B cell (primary cell): ENCODE measurements at regions of chr3 and their contacts with region 1.

Region 1: GRCh38 chr3:128969993-128970739 is 23.7 kb downstream of the CFAP92 start:
- DNase-seq: peak; percentile 80
- ATAC-seq: peak; percentile 64
- H3K4me3 ChIP-seq: no peak overlapping the region
- H3K4me3 Mint-ChIP-seq: no peak overlapping the region
- H3K27ac ChIP-seq: no peak overlapping the region
- H3K27ac Mint-ChIP-seq: no peak overlapping the region
- H3K4me1 ChIP-seq: peaks cover 14 to 15% of the 10 kb centered on the region in 2 donors
- H3K4me1 Mint-ChIP-seq: peaks cover 11% of the 10 kb centered on the region
- H3K27me3 ChIP-seq: no peaks in the 10 kb centered on the region
- H3K27me3 Mint-ChIP-seq: peaks cover 4% of the 10 kb centered on the region
- CTCF ChIP-seq: peak; percentile 97

Region 2: DNA sequence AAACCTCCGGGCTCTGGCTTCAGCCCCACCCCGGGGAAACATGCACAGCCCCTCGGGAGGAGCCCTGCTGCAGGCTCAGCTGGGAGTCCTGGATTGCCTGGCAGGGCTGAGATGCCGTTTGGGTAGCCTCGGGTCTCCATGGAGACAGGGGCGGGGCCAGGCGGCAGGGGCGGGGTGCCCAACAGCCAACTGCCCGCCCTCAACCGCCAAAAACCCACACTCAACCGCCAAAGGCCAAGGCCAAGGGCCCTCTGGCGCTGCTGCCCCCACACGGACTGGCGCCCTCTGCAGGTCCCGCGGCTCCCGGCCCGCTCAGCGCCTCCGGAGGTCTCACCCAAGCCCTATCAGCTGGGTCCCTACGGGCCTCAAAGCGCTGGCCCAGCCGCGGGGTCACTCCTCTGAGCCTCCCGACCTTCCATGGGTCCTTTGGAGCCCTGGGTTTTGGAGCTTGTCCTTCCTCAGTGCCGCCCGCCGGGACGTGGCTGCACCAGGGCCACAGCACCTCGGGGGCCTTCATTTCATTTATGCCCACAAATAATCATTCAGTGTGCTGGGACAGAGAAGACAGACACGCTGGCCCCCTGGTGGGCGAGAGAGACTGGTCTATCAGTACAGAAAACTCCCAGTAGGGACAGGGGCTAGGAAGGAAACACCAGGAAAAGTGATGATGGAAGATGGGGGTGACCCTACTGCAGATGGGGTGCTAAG is 124.2 kb before region 1 on chr3:
- CTCF ChIA-PET with region 1: no interaction called
- POLR2A ChIA-PET with region 1: no interaction called
- intact Hi-C with region 1: no loop called
- DNase-seq: peak; percentile 82
- ATAC-seq: peak; percentile 86
- H3K4me3 ChIP-seq: peak overlapping the region in 4 of 5 experiments; percentile 45 to 70 (median 58)
- H3K4me3 Mint-ChIP-seq: peak overlapping the region; percentile 85
- H3K27ac ChIP-seq: peak overlapping the region in 1 of 2 donors; percentile 52
- H3K27ac Mint-ChIP-seq: peak overlapping the region; percentile 56
- H3K4me1 ChIP-seq: peaks cover 11 to 17% of the 10 kb centered on the region in 2 donors
- H3K4me1 Mint-ChIP-seq: peaks cover 11% of the 10 kb centered on the region
- H3K27me3 ChIP-seq: no peaks in the 10 kb centered on the region
- H3K27me3 Mint-ChIP-seq: no peaks in the 10 kb centered on the region
- CTCF ChIP-seq: peak; percentile 85

Region 3: GRCh38 chr3:128879125-128879969 is 90.8 kb before region 1 on chr3 and contains the start of gene ACAD9:
- CTCF ChIA-PET with region 1: no interaction called
- POLR2A ChIA-PET with region 1: no interaction called
- intact Hi-C with region 1: no loop called
- DNase-seq: peak; percentile 97
- ATAC-seq: peak; percentile 96
- H3K4me3 ChIP-seq: peak within 1 kb of the TSS; percentile 86 to 97 (median 88)
- H3K4me3 Mint-ChIP-seq: peak within 1 kb of the TSS; percentile 95
- H3K27ac ChIP-seq: peak within 1 kb of the TSS; percentile 93 to 98
- H3K27ac Mint-ChIP-seq: peak within 1 kb of the TSS; percentile 95
- H3K4me1 ChIP-seq: peaks cover 24 to 31% of the 10 kb centered on the region in 2 donors
- H3K4me1 Mint-ChIP-seq: peaks cover 55% of the 10 kb centered on the region
- H3K27me3 ChIP-seq: no peaks in the 10 kb centered on the region
- H3K27me3 Mint-ChIP-seq: no peaks in the 10 kb centered on the region
- CTCF ChIP-seq: no peak
- total RNA-seq, gene ACAD9: 57.6 and 71.8 TPM in 2 replicates

Region 4: DNA sequence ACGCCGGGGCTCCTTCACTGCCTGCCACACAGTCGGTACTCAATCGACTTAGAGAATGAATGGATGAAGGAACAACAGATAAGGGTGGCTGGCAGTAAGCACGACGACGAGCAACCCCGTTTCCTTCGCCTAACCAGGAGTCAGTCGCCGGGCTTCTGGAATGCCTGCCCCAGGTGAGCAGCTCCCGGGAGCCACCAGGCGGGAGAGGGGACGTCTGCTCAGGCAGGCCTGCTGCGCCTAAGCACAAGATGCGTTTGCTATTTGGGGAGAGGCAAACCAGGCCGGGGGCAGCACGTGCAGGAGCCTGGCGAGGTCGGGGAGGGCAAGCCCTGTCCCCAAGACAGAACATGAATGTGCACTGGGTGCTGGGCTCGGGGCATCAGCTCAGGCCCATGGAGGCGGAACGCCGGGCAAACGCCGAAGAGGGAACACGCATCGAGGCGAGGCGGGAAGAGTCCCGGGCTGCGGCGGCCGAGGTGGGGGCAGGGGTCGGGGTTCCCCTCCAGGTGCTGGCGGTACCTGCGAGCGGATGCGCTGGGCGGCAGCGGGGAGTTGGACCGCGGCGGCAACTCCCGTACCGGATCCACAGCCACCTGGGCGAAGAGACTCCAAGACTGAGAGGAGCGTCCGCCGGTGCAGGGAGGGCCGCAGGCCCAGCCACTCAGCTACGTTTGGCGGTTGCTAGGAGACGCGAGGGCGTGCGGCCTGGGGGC is 23.5 kb after region 1 on chr3 and contains the start of gene CFAP92:
- CTCF ChIA-PET with region 1: interaction called, 29 read pairs
- POLR2A ChIA-PET with region 1: no interaction called
- intact Hi-C with region 1: loop called (anchors 2 kb)
- DNase-seq: peak; percentile 92
- ATAC-seq: peak; percentile 99
- H3K4me3 ChIP-seq: peak within 1 kb of the TSS; percentile 19 to 55 (median 44)
- H3K4me3 Mint-ChIP-seq: peak within 1 kb of the TSS; percentile 73
- H3K27ac ChIP-seq: peak within 1 kb of the TSS in 1 of 2 donors; percentile 9
- H3K27ac Mint-ChIP-seq: peak within 1 kb of the TSS; percentile 61
- H3K4me1 ChIP-seq: peaks cover 20 to 27% of the 10 kb centered on the region in 2 donors
- H3K4me1 Mint-ChIP-seq: peaks cover 16% of the 10 kb centered on the region
- H3K27me3 ChIP-seq: peaks cover 0 to 30% (median 9%) of the 10 kb centered on the region in 4 experiments
- H3K27me3 Mint-ChIP-seq: peaks cover 14% of the 10 kb centered on the region
- CTCF ChIP-seq: no peak
- total RNA-seq, gene CFAP92: not detected in 2 replicates

Region 5: DNA sequence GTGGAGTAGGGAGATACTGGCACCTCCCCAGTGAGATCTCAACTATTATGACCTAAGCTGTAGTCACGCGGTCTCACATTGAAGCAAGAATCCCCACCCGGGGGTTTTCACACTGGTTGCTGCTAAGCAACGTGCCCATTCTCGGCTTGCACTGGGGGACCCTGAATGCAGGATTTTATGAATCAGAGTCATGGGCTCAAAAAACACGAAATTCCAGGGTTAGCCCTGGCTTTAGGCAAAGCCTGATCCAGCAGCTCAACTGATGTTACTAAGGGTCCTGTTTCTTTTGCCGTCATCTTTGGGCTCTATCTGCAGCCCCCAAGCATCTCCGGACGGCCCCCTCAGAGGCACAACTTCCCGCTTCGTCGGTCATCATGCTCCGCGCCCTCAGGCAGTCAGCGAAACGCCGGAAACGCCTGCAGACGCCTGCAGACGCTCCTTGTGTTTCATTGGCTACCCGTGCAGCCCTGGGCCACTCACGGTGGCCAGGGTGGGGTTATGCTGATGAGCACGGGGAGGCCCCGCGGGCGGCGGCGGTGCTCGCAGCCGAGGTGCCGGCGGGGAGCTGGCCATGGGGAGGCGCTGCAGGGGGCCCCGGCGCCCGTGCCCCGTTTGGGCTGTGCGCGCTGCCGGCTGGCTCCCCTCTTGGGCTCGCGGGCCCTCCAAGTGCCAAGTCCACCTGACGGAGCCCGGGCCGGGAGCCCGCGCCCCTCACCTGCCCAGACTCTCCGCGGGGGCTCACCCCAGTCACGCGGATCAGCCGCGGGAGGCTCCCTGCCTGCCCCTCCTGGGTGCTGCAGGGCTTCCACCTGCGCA is 56.8 kb after region 1 on chr3:
- CTCF ChIA-PET with region 1: interaction called, 134 read pairs
- POLR2A ChIA-PET with region 1: no interaction called
- intact Hi-C with region 1: loop called (anchors 1 kb)
- DNase-seq: peak; percentile 95
- ATAC-seq: peak; percentile 98
- H3K4me3 ChIP-seq: peak overlapping the region; percentile 30 to 71 (median 61)
- H3K4me3 Mint-ChIP-seq: peak overlapping the region; percentile 91
- H3K27ac ChIP-seq: peak overlapping the region; percentile 74 to 83
- H3K27ac Mint-ChIP-seq: peak overlapping the region; percentile 95
- H3K4me1 ChIP-seq: peaks cover 13 to 15% of the 10 kb centered on the region in 2 donors
- H3K4me1 Mint-ChIP-seq: peaks cover 22% of the 10 kb centered on the region
- H3K27me3 ChIP-seq: peaks cover 0 to 6% (median 0%) of the 10 kb centered on the region in 4 experiments
- H3K27me3 Mint-ChIP-seq: peaks cover 3% of the 10 kb centered on the region
- CTCF ChIP-seq: peak; percentile 91

Region 6: GRCh38 chr3:129095285-129095684 is 125.1 kb after region 1 on chr3:
- CTCF ChIA-PET with region 1: interaction called, 11 read pairs
- POLR2A ChIA-PET with region 1: no interaction called
- intact Hi-C with region 1: no loop called
- DNase-seq: no peak
- ATAC-seq: no peak
- H3K4me3 ChIP-seq: no peak overlapping the region
- H3K4me3 Mint-ChIP-seq: no peak overlapping the region
- H3K27ac ChIP-seq: no peak overlapping the region
- H3K27ac Mint-ChIP-seq: no peak overlapping the region
- H3K4me1 ChIP-seq: no peaks in the 10 kb centered on the region
- H3K4me1 Mint-ChIP-seq: no peaks in the 10 kb centered on the region
- H3K27me3 ChIP-seq: no peaks in the 10 kb centered on the region
- H3K27me3 Mint-ChIP-seq: no peaks in the 10 kb centered on the region
- CTCF ChIP-seq: no peak

Region 7: GRCh38 chr3:129139911-129140310 is 169.7 kb after region 1 on chr3:
- CTCF ChIA-PET with region 1: no interaction called
- POLR2A ChIA-PET with region 1: no interaction called
- intact Hi-C with region 1: loop called (anchors 10 kb)
- DNase-seq: no peak
- ATAC-seq: no peak
- H3K4me3 ChIP-seq: no peak overlapping the region
- H3K4me3 Mint-ChIP-seq: no peak overlapping the region
- H3K27ac ChIP-seq: no peak overlapping the region
- H3K27ac Mint-ChIP-seq: no peak overlapping the region
- H3K4me1 ChIP-seq: no peaks in the 10 kb centered on the region
- H3K4me1 Mint-ChIP-seq: no peaks in the 10 kb centered on the region
- H3K27me3 ChIP-seq: no peaks in the 10 kb centered on the region
- H3K27me3 Mint-ChIP-seq: no peaks in the 10 kb centered on the region
- CTCF ChIP-seq: no peak

Region 8: GRCh38 chr3:129316131-129317013 is 346.2 kb after region 1 on chr3:
- CTCF ChIA-PET with region 1: interaction called, 41 read pairs
- POLR2A ChIA-PET with region 1: no interaction called
- intact Hi-C with region 1: no loop called
- DNase-seq: peak; percentile 88
- ATAC-seq: peak; percentile 45
- H3K4me3 ChIP-seq: peak overlapping the region; percentile 30 to 84 (median 82)
- H3K4me3 Mint-ChIP-seq: peak overlapping the region; percentile 82
- H3K27ac ChIP-seq: peak overlapping the region in 1 of 2 donors; percentile 78
- H3K27ac Mint-ChIP-seq: peak overlapping the region; percentile 87
- H3K4me1 ChIP-seq: peaks cover 26 to 40% of the 10 kb centered on the region in 2 donors
- H3K4me1 Mint-ChIP-seq: peaks cover 27% of the 10 kb centered on the region
- H3K27me3 ChIP-seq: peaks cover 0 to 30% (median 15%) of the 10 kb centered on the region in 4 experiments
- H3K27me3 Mint-ChIP-seq: peaks cover 18% of the 10 kb centered on the region
- CTCF ChIP-seq: peak; percentile 71